Activated T-helper 1 cell treated with anti-CD3 and anti-CD28 coated beads, Interleukin-12 subunit alpha, Interleukin-12 subunit beta, Interleukin-2, Interleukin-4 antibody, amounts not matched to agents 30 ng/mL and 10 ng/mL and 1 ng/mL, durations not matched to agents 14 hours and 24 hours and 36 hours (primary cell): ENCODE measurements at regions of chr10 and their contacts with region 1.

Region 1: DNA sequence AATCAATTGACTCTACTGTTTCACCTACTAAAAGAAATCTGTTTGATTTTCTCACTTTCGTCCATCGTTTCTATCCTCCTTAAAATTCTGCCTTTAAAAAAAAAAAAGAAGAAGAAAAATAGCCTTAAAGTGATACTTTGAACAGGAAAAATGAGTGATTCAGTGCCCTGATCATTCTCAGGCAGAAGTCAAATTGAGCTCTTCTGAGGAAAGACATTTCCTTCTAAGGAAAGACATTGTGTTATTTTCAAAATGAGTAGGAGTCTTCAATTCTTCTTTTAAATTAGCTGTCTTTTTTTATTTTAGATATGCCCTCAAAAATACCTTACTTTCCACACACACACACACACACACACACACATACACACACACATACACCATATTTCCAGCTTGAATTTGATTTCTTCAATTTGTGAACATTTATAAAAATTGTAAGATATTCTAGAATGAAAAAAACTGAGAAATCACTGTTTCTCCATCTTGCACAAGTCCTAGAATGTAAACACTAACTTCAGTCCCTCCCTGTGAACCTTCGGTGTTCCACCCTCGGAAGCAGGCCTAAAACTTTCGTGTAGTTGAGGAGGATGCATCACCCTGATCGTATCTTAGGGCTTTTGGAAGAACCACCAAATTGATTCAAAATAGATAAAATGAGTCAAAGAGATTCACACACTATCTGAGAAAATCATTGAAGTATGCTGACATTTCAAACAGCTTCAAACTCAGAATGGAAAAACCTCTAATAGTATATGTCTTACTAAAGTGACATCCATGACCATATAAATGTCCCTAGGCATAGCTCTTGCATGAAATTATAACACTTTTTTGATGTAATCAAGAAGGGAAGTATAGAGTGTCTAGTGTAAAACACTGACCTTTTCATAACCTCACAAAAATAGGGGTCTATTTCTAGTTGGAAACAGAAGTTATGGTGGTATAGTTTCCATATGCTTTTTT is 270.8 kb downstream of the GATA3 start:
- DNase-seq: no peak
- H3K4me3 Mint-ChIP-seq: peak overlapping the region; percentile 63
- H3K27ac Mint-ChIP-seq: peak overlapping the region; percentile 85
- H3K4me1 Mint-ChIP-seq: peaks cover 57% of the 10 kb centered on the region
- H3K27me3 Mint-ChIP-seq: peaks cover 15% of the 10 kb centered on the region

Region 2: DNA sequence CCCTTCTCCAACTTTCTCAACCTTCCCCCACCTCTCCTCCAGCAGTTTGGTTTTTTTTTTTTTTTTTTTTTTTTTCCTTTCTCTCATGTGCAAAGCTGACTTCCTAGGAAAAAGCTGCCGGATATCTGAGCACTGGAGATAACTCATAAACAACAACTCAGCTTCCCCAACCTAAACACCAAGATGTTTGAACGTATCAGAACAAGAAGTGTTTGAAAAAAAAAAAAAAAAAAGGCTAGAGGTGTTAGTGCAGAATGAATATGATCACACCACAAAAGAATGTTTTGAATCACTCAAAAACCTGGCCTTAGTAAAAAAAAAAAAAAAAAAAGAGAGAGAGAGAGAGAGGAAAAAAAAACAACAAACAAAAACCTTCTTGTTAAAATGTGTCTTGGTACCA is 259.7 kb before region 1 on chr10:
- intact Hi-C with region 1: loop called (anchors 1 kb)
- DNase-seq: no peak
- H3K4me3 Mint-ChIP-seq: peak overlapping the region; percentile 77
- H3K27ac Mint-ChIP-seq: peak overlapping the region; percentile 88
- H3K4me1 Mint-ChIP-seq: peaks cover 92% of the 10 kb centered on the region
- H3K27me3 Mint-ChIP-seq: peaks cover 2% of the 10 kb centered on the region

Region 3: DNA sequence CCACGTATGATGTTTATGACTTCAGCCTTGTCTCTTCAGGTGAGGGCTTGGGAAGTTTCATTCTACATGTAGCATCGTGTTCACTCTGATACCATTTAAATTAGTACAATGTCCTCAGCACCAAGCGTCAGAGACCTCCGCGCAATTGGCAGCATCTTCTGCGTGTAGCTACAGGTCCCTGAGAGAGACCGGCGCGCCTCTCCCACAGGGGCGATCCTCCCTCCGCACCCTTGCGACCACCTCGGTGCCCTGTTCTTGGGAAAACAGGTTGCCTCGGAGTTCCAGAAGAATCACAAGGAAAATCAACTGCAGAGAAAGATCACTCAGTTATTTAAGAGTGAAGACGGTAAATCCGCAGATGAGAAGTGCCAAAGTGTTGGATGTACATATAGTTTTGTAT is 64.7 kb before region 1 on chr10:
- intact Hi-C with region 1: no loop called
- DNase-seq: no peak
- H3K4me3 Mint-ChIP-seq: no peak overlapping the region
- H3K27ac Mint-ChIP-seq: no peak overlapping the region
- H3K4me1 Mint-ChIP-seq: peaks cover 20% of the 10 kb centered on the region
- H3K27me3 Mint-ChIP-seq: peaks cover 7% of the 10 kb centered on the region

Region 4: DNA sequence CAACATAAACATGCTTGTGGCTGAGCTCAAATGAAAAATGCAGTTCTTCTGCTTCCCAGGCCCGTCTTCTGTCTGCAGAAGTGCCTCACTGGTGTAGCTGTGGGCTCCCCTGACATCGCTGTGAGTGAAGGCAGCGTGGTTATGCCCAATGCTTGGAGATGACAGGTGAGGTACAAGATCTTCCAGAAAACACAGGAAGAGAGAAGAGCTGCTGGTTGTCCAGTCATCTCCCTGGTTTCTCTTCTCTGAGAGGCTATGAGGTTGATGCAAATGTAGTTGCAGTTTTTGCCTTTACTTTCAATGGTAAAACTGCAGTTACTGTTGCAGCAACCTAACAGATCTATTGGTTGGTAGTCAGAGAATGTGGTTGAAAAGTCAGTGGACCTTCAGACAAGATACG is 47.2 kb before region 1 on chr10:
- intact Hi-C with region 1: loop called (anchors 1 kb)
- DNase-seq: no peak
- H3K4me3 Mint-ChIP-seq: no peak overlapping the region
- H3K27ac Mint-ChIP-seq: peak overlapping the region; percentile 31
- H3K4me1 Mint-ChIP-seq: peaks cover 12% of the 10 kb centered on the region
- H3K27me3 Mint-ChIP-seq: peaks cover 18% of the 10 kb centered on the region

Region 5: GRCh38 chr10:8338177-8338766 is 13.0 kb after region 1 on chr10:
- intact Hi-C with region 1: loop called (anchors 1 kb)
- DNase-seq: no peak
- H3K4me3 Mint-ChIP-seq: no peak overlapping the region
- H3K27ac Mint-ChIP-seq: peak overlapping the region; percentile 90
- H3K4me1 Mint-ChIP-seq: peaks cover 25% of the 10 kb centered on the region
- H3K27me3 Mint-ChIP-seq: peaks cover 19% of the 10 kb centered on the region

Region 6: DNA sequence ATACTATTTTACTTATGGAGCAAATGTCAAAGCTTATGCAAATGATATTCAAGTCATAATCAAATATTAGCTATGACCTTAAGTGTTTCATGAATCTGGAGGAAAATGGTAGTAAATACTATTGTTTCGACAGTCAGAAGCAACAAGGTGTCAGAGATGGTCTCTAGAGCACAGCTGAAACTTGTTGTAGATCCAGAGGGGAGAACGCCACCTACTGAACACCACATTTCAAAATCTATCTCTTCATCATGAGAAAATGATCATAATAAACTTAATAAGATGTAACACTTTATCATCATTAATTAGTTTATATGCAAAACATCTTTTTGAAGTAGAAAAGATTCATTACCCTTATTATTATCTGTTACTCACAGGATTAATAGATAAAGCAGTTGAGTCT is 147.9 kb after region 1 on chr10:
- intact Hi-C with region 1: loop called (anchors 2 kb)
- DNase-seq: peak; percentile 5
- H3K4me3 Mint-ChIP-seq: no peak overlapping the region
- H3K27ac Mint-ChIP-seq: no peak overlapping the region
- H3K4me1 Mint-ChIP-seq: peaks cover 8% of the 10 kb centered on the region
- H3K27me3 Mint-ChIP-seq: peaks cover 33% of the 10 kb centered on the region